ENCODE measurements at regions of chr18 and their contacts with region 1.

Region 1: GRCh38 chr18:76859474-76860339 is 37.4 kb downstream of the ZNF236 start:
- DNase-seq: peak; percentile 66
- H3K4me3 Mint-ChIP-seq: no peak overlapping the region
- H3K27ac Mint-ChIP-seq: peak overlapping the region; percentile 54
- H3K4me1 Mint-ChIP-seq: peaks cover 22% of the 10 kb centered on the region
- H3K27me3 Mint-ChIP-seq: no peaks in the 10 kb centered on the region

Region 2: GRCh38 chr18:76835380-76835779 is 24.3 kb before region 1 on chr18:
- CTCF ChIA-PET with region 1: no interaction called
- intact Hi-C with region 1: loop called (anchors 2 kb)
- DNase-seq: no peak
- H3K4me3 Mint-ChIP-seq: no peak overlapping the region
- H3K27ac Mint-ChIP-seq: no peak overlapping the region
- H3K4me1 Mint-ChIP-seq: peaks cover 40% of the 10 kb centered on the region
- H3K27me3 Mint-ChIP-seq: no peaks in the 10 kb centered on the region

Region 3: GRCh38 chr18:77147418-77147852 is 287.7 kb after region 1 on chr18:
- CTCF ChIA-PET with region 1: no interaction called
- intact Hi-C with region 1: no loop called
- DNase-seq: peak; percentile 52
- H3K4me3 Mint-ChIP-seq: peak overlapping the region; percentile 2
- H3K27ac Mint-ChIP-seq: peak overlapping the region; percentile 84
- H3K4me1 Mint-ChIP-seq: peaks cover 40% of the 10 kb centered on the region
- H3K27me3 Mint-ChIP-seq: no peaks in the 10 kb centered on the region

Region 4: DNA sequence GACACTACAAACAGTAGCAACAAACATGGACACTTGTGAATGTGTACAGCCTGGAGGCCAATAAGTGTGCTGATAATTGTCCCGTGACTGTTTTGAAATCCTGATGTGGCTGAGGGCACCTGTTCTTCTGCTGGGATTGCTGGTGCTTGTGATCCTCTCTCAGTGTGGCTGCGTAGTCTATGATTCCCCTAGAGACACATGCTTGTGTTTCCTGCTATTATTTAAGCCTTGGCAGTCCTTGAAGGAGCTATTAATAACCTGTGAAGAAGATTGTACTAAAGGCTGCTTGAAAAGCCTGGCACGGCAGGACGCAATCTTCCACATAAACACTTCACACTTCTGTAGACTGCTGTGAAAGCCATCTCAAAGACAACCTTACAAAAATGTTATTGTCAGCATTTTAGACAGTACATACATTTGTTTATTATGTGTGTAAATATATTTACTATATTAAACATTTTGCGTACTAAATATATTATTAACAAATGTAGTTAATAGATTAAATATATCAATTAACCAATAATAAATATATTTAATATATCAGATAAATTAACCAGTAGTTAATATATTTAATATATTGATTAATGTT is 461.4 kb after region 1 on chr18:
- CTCF ChIA-PET with region 1: no interaction called
- intact Hi-C with region 1: no loop called
- DNase-seq: no peak
- H3K4me3 Mint-ChIP-seq: no peak overlapping the region
- H3K27ac Mint-ChIP-seq: no peak overlapping the region
- H3K4me1 Mint-ChIP-seq: no peaks in the 10 kb centered on the region
- H3K27me3 Mint-ChIP-seq: peaks cover 7% of the 10 kb centered on the region

Measured in activated naive CD4-positive, alpha-beta T cell treated with anti-CD3 and anti-CD28 coated beads for 36 hours (primary cell).